ENCODE measurements at regions of chr20 and their contacts with region 1.

Region 1: DNA sequence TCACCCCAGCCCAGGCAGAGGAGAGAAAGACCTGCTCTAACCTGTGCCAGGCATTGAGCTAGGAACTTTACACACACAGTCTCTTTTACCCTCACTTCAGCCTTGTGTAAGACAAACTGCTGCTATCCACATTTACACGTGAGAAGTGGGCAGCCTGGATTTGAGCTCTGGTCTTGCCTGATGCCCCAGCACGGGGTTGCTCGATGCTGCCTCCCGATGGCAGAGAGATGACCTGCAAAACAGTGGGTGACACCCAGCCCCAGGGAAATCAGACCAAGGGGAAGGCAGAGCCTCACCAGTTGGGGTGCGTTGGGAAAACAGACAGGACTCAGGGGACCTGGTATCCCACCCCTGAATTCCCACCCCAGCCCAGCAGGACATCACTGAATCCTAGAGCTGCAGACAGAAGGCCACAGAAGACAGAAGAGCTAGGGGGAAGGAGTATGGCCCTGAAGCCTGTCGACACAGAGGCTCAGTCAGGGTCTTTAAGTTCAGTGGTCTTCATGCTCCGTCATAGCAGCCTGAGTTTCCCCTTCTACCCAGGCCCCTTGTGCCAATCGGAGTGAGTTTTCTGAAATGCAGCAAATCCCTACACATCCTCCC is 990 bp downstream of the BPI start:
- DNase-seq: peak; percentile 66 to 77 (median 69)
- H3K4me3 ChIP-seq: peak overlapping the region in 1 of 3 experiments; percentile 65
- H3K4me3 Mint-ChIP-seq: peak overlapping the region; percentile 64 to 81
- H3K27ac ChIP-seq: peak overlapping the region; percentile 53 to 76
- H3K27ac Mint-ChIP-seq: peak overlapping the region; percentile 63 to 94 (median 86)
- H3K4me1 ChIP-seq: peaks cover 75 to 79% of the 10 kb centered on the region in 2 donors
- H3K4me1 Mint-ChIP-seq: peaks cover 81% of the 10 kb centered on the region
- H3K27me3 ChIP-seq: peaks cover 2 to 6% of the 10 kb centered on the region in 2 donors
- H3K27me3 Mint-ChIP-seq: peaks cover 7 to 20% (median 14%) of the 10 kb centered on the region in 3 donors
- CTCF ChIP-seq: peak; percentile 88

Region 2: GRCh38 chr20:38252292-38253288 is 52.4 kb before region 1 on chr20:
- intact Hi-C with region 1: loop called in 1 of 2 experiments (anchors 5 kb)
- DNase-seq: no peak
- H3K4me3 ChIP-seq: no peak overlapping the region
- H3K4me3 Mint-ChIP-seq: no peak overlapping the region
- H3K27ac ChIP-seq: no peak overlapping the region
- H3K27ac Mint-ChIP-seq: peak overlapping the region in 2 of 7 donors; percentile 13 to 82
- H3K4me1 ChIP-seq: peaks cover 20 to 32% of the 10 kb centered on the region in 2 donors
- H3K4me1 Mint-ChIP-seq: peaks cover 29% of the 10 kb centered on the region
- H3K27me3 ChIP-seq: no peaks in the 10 kb centered on the region
- H3K27me3 Mint-ChIP-seq: peaks cover 0 to 17% (median 0%) of the 10 kb centered on the region in 3 donors
- CTCF ChIP-seq: no peak